Natural killer cell (primary cell): ENCODE measurements at regions of chr14 and their contacts with region 1.

Region 1: DNA sequence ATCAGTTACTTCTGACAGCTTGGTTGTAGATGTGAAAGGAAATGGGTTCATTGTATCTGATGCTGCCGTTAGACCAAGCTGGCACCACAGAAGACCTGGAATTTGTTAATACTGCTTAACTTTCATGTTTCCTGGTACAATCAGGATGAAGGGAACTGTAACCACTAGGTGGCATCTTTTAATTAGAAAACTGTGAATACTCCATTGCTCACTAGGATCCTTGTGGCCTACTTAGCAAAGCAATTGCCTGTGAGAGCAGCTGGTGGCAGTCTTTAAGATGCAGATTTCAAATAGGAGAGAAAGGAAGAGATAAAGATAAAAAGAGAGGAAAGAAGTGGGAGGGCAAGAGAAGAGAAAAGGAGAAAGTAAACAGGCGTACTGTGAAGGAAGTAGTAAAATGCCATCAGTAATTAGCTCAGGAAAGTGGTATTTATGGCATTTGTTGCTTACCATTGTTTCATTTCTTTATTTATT is 114.5 kb downstream of the RAD51B start:
- DNase-seq: peak in 1 of 2 donors; percentile 66
- ATAC-seq: peak; percentile 50 to 77 (median 54)
- H3K4me3 ChIP-seq: no peak overlapping the region
- H3K4me3 Mint-ChIP-seq: no peak overlapping the region
- H3K27ac ChIP-seq: no peak overlapping the region
- H3K27ac Mint-ChIP-seq: peak overlapping the region in 1 of 2 donors; percentile 2
- H3K4me1 ChIP-seq: no peaks in the 10 kb centered on the region
- H3K4me1 Mint-ChIP-seq: peaks cover 5 to 6% of the 10 kb centered on the region in 2 donors
- H3K27me3 ChIP-seq: no peaks in the 10 kb centered on the region
- H3K27me3 Mint-ChIP-seq: no peaks in the 10 kb centered on the region
- CTCF ChIP-seq: peak; percentile 36

Region 2: GRCh38 chr14:67680121-67680602 is 253.9 kb before region 1 on chr14:
- intact Hi-C with region 1: no loop called
- DNase-seq: no peak
- ATAC-seq: peak; percentile 30 to 94 (median 50)
- H3K4me3 ChIP-seq: no peak overlapping the region
- H3K4me3 Mint-ChIP-seq: no peak overlapping the region
- H3K27ac ChIP-seq: no peak overlapping the region
- H3K27ac Mint-ChIP-seq: no peak overlapping the region
- H3K4me1 ChIP-seq: peaks cover 3% of the 10 kb centered on the region
- H3K4me1 Mint-ChIP-seq: peaks cover 4 to 5% of the 10 kb centered on the region in 2 donors
- H3K27me3 ChIP-seq: no peaks in the 10 kb centered on the region
- H3K27me3 Mint-ChIP-seq: no peaks in the 10 kb centered on the region
- CTCF ChIP-seq: no peak

Region 3: GRCh38 chr14:67837011-67837624 is 96.9 kb before region 1 on chr14:
- intact Hi-C with region 1: loop called (anchors 10 kb)
- DNase-seq: peak; percentile 39 to 84
- ATAC-seq: peak; percentile 78 to 83 (median 78)
- H3K4me3 ChIP-seq: no peak overlapping the region
- H3K4me3 Mint-ChIP-seq: no peak overlapping the region
- H3K27ac ChIP-seq: no peak overlapping the region
- H3K27ac Mint-ChIP-seq: peak overlapping the region in 1 of 2 donors; percentile 45
- H3K4me1 ChIP-seq: peaks cover 3% of the 10 kb centered on the region
- H3K4me1 Mint-ChIP-seq: no peaks in the 10 kb centered on the region
- H3K27me3 ChIP-seq: no peaks in the 10 kb centered on the region
- H3K27me3 Mint-ChIP-seq: no peaks in the 10 kb centered on the region
- CTCF ChIP-seq: peak; percentile 68

Region 4: DNA sequence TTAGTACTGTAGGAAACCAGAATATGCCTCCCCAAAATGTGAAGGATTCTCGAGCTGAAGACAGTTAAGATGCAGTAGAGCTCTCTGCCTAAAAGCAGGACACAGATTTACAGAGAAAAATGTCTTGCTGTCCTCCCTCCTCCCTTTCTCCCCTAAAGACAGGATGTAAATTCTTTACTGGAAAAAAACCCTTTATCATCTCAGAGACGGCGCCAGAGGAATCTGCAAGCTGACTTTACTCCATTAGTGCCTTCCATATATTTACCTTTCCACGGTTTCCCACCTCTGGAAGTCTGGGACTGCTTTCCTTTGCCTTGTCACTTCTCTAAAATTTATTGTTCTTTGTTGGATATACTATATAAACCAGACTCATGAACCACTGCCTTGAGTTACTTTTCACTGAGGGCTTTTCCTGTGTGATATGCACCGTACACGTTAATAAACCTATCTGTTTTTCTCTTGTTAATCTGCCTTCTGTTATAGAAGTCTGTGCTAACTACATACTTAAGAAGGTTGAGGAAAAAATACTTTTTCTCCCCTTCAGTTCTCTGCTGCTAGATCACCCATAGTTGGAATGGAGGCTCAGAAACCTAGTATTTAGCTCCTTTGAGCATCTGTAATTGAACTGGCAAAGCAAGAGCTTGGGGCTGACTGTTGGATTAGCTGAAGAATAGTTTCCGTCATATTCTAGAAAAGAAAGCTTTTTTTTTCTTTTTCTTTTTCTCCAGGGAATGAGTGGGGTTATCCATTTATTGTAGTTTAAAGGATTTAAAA is 14.6 kb before region 1 on chr14:
- intact Hi-C with region 1: no loop called
- DNase-seq: no peak
- ATAC-seq: no peak
- H3K4me3 ChIP-seq: no peak overlapping the region
- H3K4me3 Mint-ChIP-seq: no peak overlapping the region
- H3K27ac ChIP-seq: no peak overlapping the region
- H3K27ac Mint-ChIP-seq: no peak overlapping the region
- H3K4me1 ChIP-seq: no peaks in the 10 kb centered on the region
- H3K4me1 Mint-ChIP-seq: no peaks in the 10 kb centered on the region
- H3K27me3 ChIP-seq: no peaks in the 10 kb centered on the region
- H3K27me3 Mint-ChIP-seq: no peaks in the 10 kb centered on the region
- CTCF ChIP-seq: no peak

Region 5: DNA sequence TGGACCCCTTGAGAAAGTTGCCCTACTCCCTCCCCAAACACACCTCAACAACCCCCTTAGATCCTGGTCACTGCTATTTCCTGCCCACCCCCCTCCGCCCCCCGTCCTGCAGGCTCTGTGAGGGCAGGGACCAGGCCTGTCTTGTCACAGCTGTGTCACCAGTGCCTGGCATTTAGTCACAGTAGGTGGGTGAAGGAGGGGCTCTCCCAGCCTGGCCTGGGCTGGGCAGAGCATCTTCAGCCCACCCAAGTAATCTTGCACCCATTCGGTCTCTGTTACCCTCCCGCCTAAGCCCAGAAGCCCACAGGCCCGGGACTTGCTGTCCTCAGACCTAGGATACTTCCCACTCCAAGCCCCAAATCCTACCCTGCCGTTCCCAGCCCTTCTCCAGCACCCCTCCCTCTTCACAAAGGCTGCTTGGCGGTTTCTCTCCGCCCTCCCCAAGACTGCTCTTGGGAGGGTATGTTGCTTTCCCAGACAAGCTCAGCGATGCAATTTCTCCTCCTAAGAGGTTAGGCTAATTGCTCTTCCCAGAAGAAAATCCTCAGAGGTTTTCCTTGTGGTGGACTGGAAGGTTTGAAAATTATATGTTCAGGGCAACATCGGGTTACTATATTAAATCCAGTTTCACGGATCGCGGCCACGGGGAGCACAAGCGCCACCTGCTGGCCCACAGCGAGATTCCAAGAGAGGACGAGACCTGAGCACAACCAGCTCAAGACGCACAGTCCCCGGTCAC is 909.6 kb after region 1 on chr14:
- intact Hi-C with region 1: loop called (anchors 5 kb)
- DNase-seq: peak; percentile 75 to 86
- ATAC-seq: peak; percentile 64 to 73 (median 71)
- H3K4me3 ChIP-seq: no peak overlapping the region
- H3K4me3 Mint-ChIP-seq: peak overlapping the region; percentile 71
- H3K27ac ChIP-seq: no peak overlapping the region
- H3K27ac Mint-ChIP-seq: peak overlapping the region; percentile 31 to 86
- H3K4me1 ChIP-seq: peaks cover 32% of the 10 kb centered on the region
- H3K4me1 Mint-ChIP-seq: peaks cover 48 to 50% of the 10 kb centered on the region in 2 donors
- H3K27me3 ChIP-seq: no peaks in the 10 kb centered on the region
- H3K27me3 Mint-ChIP-seq: peaks cover 0 to 7% of the 10 kb centered on the region in 2 donors
- CTCF ChIP-seq: peak; percentile 93